Spleen (tissue), 13 donors: ENCODE measurements at regions of chr12 and their contacts with region 1.

Region 1: DNA sequence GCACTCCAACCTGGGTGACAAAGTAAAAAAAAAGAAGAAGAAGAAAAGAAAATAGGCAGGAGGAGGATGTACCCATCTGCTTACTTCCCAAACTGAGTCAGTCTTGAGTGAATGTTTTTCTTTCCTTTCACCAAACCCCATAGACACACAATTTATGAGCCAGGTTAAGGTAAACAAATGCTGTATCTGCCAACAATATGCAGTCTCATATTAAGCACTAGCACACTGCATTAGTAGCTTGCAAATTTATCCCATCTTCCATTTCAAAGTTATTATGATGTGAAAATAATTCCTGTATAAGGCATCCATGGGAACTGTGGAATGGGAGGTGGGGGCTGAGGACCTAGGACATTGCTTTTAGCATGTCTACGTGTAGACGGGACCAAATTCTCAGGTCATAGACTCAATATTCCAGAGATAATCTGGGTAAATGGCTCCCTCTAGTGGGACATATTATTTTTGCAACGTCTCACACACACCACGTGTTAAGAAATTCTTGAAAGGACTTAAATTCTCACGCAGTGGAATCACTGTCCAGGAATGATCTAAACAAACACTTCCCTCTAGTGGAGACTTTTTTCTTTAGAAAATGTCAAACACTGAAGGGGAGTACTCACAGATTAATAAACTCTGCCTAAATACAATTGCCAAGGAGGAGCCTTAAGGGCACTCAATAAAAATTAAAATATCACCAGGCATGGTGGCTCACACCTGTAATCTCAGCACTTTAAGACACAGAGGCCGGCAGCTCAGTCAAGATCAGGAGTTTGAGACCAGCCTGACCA is 17.1 kb upstream of the OR10P1 start:
- DNase-seq: no peak
- H3K4me3 ChIP-seq: no peak overlapping the region
- H3K27ac ChIP-seq: peak overlapping the region in 1 of 8 donors; percentile 19
- H3K4me1 ChIP-seq: peaks cover 0 to 10% (median 7%) of the 10 kb centered on the region in 6 donors
- H3K27me3 ChIP-seq: peaks cover 0 to 21% (median 0%) of the 10 kb centered on the region in 7 donors
- CTCF ChIP-seq: peak; percentile 57 to 94 (median 83)
- POLR2A ChIP-seq: no peak

Region 2: GRCh38 chr12:55188974-55189556 is 430.5 kb before region 1 on chr12:
- intact Hi-C with region 1: loop called (anchors 5 kb)
- DNase-seq: no peak
- H3K4me3 ChIP-seq: no peak overlapping the region
- H3K27ac ChIP-seq: no peak overlapping the region
- H3K4me1 ChIP-seq: no peaks in the 10 kb centered on the region
- H3K27me3 ChIP-seq: peaks cover 0 to 9% (median 0%) of the 10 kb centered on the region in 7 donors
- CTCF ChIP-seq: peak; percentile 51 to 74 (median 70)
- POLR2A ChIP-seq: no peak

Region 3: GRCh38 chr12:55495490-55495889 is 124.1 kb before region 1 on chr12:
- intact Hi-C with region 1: no loop called
- DNase-seq: no peak
- H3K4me3 ChIP-seq: no peak overlapping the region
- H3K27ac ChIP-seq: no peak overlapping the region
- H3K4me1 ChIP-seq: no peaks in the 10 kb centered on the region
- H3K27me3 ChIP-seq: no peaks in the 10 kb centered on the region
- CTCF ChIP-seq: no peak
- POLR2A ChIP-seq: no peak

Region 4: DNA sequence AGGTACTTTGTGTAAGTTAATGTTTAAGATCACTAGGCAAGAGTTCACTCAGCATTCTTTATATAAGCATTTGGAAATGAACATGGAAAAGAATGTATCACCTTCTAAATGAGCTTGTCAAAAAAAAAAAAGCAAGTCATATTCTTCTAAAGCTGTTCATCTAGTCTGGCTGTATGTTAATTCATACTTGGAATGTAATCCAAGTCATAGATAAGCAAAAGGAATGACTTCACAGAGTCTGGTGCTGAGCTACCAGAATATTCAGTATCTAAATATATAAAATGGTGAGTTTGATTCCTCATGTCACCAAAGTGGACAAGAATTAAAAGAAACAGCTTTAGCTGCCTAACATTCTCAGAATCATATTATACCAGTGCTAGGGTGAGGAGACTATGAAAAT is 65.2 kb before region 1 on chr12:
- intact Hi-C with region 1: no loop called
- DNase-seq: no peak
- H3K4me3 ChIP-seq: no peak overlapping the region
- H3K27ac ChIP-seq: no peak overlapping the region
- H3K4me1 ChIP-seq: no peaks in the 10 kb centered on the region
- H3K27me3 ChIP-seq: peaks cover 0 to 11% (median 0%) of the 10 kb centered on the region in 7 donors
- CTCF ChIP-seq: no peak
- POLR2A ChIP-seq: no peak

Region 5: DNA sequence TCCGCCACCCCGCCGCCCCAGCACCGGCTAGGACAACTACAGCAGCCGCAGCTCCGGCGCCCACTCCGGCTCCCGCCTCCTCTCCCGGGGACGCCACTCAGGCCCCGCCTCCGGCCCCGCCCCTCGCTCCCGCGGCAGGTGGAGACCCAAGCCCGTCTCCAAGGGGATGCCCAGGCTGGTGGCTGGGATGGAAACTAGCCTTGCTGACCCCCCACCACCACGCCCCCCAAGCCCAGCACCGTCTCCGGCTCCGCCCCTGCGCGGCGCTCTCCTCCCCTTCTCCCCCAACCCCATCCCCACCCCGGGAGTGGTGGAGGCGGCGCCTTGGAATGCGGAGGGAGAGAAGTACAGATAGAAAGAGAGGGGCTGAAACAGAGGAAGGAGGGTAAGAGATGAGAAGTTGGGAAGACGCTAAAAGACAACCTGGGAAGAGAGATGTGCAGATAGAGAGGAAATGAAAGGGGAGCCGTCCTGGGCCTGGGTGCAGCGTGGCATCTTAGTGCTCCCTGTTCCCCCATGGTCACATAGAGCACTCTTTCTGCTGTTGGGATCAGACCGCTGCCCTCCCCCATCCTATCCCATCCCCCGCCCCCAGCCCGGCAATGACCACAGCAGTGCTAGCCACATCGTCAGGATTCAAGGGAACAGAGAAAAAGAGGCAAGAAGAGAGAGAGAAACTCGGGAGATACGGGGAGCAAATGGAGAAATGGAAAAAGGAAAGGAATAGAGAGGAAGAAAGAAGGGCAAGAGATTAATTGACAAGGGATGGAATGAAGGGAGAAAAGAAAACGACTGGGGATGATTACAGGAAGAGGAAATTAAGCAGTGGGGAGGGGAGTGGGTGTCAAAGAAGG is 88.5 kb after region 1 on chr12 and contains the start of gene ITGA7:
- intact Hi-C with region 1: no loop called
- DNase-seq: peak; percentile 92
- H3K4me3 ChIP-seq: peak within 1 kb of the TSS; percentile 51 to 90 (median 62)
- H3K27ac ChIP-seq: peak within 1 kb of the TSS in 3 of 8 donors; percentile 18 to 56 (median 48)
- H3K4me1 ChIP-seq: peaks cover 12 to 63% (median 31%) of the 10 kb centered on the region in 6 donors
- H3K27me3 ChIP-seq: peaks cover 0 to 28% (median 0%) of the 10 kb centered on the region in 7 donors
- CTCF ChIP-seq: no peak
- POLR2A ChIP-seq: no peak
- total RNA-seq, gene ITGA7: 13.8 to 93.2 (median 24.7) TPM

Region 6: GRCh38 chr12:55829967-55830600 is 210.5 kb after region 1 on chr12:
- intact Hi-C with region 1: no loop called
- DNase-seq: peak; percentile 93
- H3K4me3 ChIP-seq: peak overlapping the region; percentile 74 to 96 (median 86)
- H3K27ac ChIP-seq: peak overlapping the region; percentile 85 to 94 (median 92)
- H3K4me1 ChIP-seq: peaks cover 25 to 72% (median 62%) of the 10 kb centered on the region in 6 donors
- H3K27me3 ChIP-seq: no peaks in the 10 kb centered on the region
- CTCF ChIP-seq: no peak
- POLR2A ChIP-seq: no peak